Esophagus squamous epithelium (tissue), 5 donors: ENCODE measurements at regions of chr18 and their contacts with region 1.

Region 1: GRCh38 chr18:61575419-61575818 is 242.2 kb downstream of the CDH20 start:
- DNase-seq: no peak
- H3K4me3 ChIP-seq: no peak overlapping the region
- H3K27ac ChIP-seq: no peak overlapping the region
- H3K4me1 ChIP-seq: peaks cover 4 to 11% (median 4%) of the 10 kb centered on the region in 3 donors
- H3K27me3 ChIP-seq: peaks cover 0 to 9% (median 0%) of the 10 kb centered on the region in 4 donors
- CTCF ChIP-seq: no peak
- POLR2A ChIP-seq: no peak

Region 2: DNA sequence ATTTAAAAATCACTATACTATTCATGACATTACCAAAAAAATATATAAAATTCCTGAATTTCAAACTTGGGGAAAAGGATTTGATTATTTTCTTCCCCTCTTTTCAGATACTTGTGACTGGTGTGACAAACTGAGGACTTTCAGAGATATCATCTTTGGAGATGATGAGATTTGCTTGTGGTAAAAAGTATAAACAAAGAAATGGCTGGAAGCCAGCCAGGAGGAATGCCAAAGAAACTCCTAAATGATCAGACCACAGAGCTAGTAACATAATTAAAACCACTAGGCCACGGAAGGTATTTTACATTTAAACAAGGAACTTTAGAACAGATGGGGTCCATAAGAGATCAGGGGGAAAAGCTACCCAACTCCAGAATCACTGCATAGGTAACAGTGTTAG is 552.7 kb after region 1 on chr18:
- intact Hi-C with region 1: loop called (anchors 10 kb)
- DNase-seq: no peak
- H3K4me3 ChIP-seq: no peak overlapping the region
- H3K27ac ChIP-seq: no peak overlapping the region
- H3K4me1 ChIP-seq: no peaks in the 10 kb centered on the region
- H3K27me3 ChIP-seq: no peaks in the 10 kb centered on the region
- CTCF ChIP-seq: no peak
- POLR2A ChIP-seq: no peak